CD8-positive, alpha-beta memory T cell (primary cell): ENCODE measurements at regions of chr17 and their contacts with region 1.

Region 1: GRCh38 chr17:67390646-67391384 is 13.7 kb downstream of the PITPNC1 start:
- DNase-seq: peak; percentile 42 to 82 (median 55)
- H3K4me3 ChIP-seq: peak overlapping the region; percentile 3
- H3K4me3 Mint-ChIP-seq: peak overlapping the region; percentile 75 to 96 (median 84)
- H3K27ac ChIP-seq: peak overlapping the region; percentile 1
- H3K27ac Mint-ChIP-seq: peak overlapping the region; percentile 89 to 99 (median 94)
- H3K4me1 ChIP-seq: peaks cover 69% of the 10 kb centered on the region
- H3K4me1 Mint-ChIP-seq: peaks cover 69 to 94% (median 88%) of the 10 kb centered on the region in 3 donors
- H3K27me3 ChIP-seq: no peaks in the 10 kb centered on the region
- H3K27me3 Mint-ChIP-seq: no peaks in the 10 kb centered on the region

Region 2: GRCh38 chr17:67293251-67294203 is 97.3 kb before region 1 on chr17:
- CTCF ChIA-PET with region 1: no interaction called
- POLR2A ChIA-PET with region 1: no interaction called
- DNase-seq: peak; percentile 44 to 79 (median 60)
- H3K4me3 ChIP-seq: no peak overlapping the region
- H3K4me3 Mint-ChIP-seq: peak overlapping the region in 4 of 7 donors; percentile 26 to 81 (median 58)
- H3K27ac ChIP-seq: no peak overlapping the region
- H3K27ac Mint-ChIP-seq: peak overlapping the region in 4 of 8 donors; percentile 14 to 86 (median 50)
- H3K4me1 ChIP-seq: no peaks in the 10 kb centered on the region
- H3K4me1 Mint-ChIP-seq: peaks cover 5 to 14% (median 6%) of the 10 kb centered on the region in 3 donors
- H3K27me3 ChIP-seq: no peaks in the 10 kb centered on the region
- H3K27me3 Mint-ChIP-seq: no peaks in the 10 kb centered on the region

Region 3: DNA sequence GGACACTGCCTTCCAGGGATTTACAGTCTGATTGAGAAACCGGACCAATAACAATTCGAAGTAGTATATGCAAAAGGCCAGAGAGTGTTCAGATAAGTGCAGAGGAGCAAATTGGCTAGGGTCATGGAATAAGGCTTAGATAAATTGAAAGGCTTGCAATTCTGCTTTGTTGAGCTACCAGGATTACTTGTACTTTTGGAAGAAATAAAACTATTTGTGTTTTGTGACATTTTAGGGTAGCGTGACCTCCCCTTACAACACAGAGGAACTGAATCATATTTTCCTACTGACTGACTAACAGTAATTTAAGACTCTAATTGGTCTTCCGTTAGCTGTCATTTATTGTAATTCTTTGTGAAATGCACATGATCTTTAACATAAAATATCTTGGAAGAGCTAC is 91.0 kb after region 1 on chr17:
- CTCF ChIA-PET with region 1: interaction called, 81 read pairs
- POLR2A ChIA-PET with region 1: interaction called, 4 read pairs
- DNase-seq: no peak
- H3K4me3 ChIP-seq: no peak overlapping the region
- H3K4me3 Mint-ChIP-seq: peak overlapping the region in 3 of 7 donors; percentile 20 to 52 (median 25)
- H3K27ac ChIP-seq: no peak overlapping the region
- H3K27ac Mint-ChIP-seq: peak overlapping the region in 7 of 8 donors; percentile 19 to 80 (median 59)
- H3K4me1 ChIP-seq: peaks cover 53% of the 10 kb centered on the region
- H3K4me1 Mint-ChIP-seq: peaks cover 75 to 90% (median 86%) of the 10 kb centered on the region in 3 donors
- H3K27me3 ChIP-seq: no peaks in the 10 kb centered on the region
- H3K27me3 Mint-ChIP-seq: no peaks in the 10 kb centered on the region